ENCODE measurements at regions of chr19 and their contacts with region 1.

Region 1: DNA sequence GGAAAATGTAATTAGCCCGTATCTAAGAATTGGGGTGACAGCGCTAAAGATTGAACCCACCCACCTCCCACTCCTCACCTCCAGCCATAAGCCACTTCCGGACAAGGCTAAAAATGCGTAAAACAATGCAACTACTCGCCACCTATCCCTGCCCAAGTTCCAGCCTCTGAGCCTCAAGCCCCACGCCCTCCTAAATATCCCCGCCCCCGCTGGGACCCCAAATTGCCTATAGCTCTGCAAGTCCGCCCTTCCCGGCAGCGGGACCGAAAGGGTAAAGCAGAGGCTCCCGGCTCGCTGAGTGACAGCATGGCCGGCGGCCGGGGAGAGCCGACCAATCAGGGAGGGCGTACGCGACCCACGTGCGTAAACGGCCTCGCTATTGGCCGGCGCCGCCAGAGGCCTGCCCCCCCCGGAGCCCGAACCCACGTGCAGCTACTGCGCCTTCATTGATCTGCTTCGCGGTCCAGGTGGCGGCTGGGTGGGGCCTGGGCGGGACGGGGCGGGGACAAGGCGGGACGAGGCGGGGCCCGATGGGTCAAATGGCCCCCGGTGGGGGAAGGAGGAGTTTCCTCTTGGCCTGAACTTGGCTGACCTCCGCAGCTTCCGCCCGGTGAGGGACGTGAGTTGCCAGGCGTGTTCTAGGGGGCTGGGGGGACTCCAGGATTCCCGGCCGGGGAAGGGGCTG is at the start of gene TLE6:
- DNase-seq: peak; percentile 95
- ATAC-seq: peak; percentile 98 to 99
- H3K4me3 ChIP-seq: peak within 1 kb of the TSS; percentile 53
- H3K27ac ChIP-seq: peak within 1 kb of the TSS; percentile 76 to 88
- H3K4me1 ChIP-seq: peaks cover 8% of the 10 kb centered on the region; the same call in 2 of the 3 replicates
- CTCF ChIP-seq: no peak
- EP300 ChIP-seq: no peak
- POLR2A ChIP-seq: no peak
- RAD21 ChIP-seq: no peak
- polyA plus RNA-seq, gene TLE6: 3.1 and 6.1 TPM in 2 replicates

Region 2: GRCh38 chr19:2933490-2933910 is 43.6 kb before region 1 on chr19:
- CTCF ChIA-PET with region 1: no interaction called
- POLR2A ChIA-PET with region 1: no interaction called
- DNase-seq: peak in 1 of 2 experiments; percentile 26
- ATAC-seq: no peak
- H3K4me3 ChIP-seq: no peak overlapping the region
- H3K27ac ChIP-seq: no peak overlapping the region
- H3K4me1 ChIP-seq: no peaks in the 10 kb centered on the region
- CTCF ChIP-seq: no peak
- EP300 ChIP-seq: no peak
- POLR2A ChIP-seq: no peak
- RAD21 ChIP-seq: no peak

Region 3: DNA sequence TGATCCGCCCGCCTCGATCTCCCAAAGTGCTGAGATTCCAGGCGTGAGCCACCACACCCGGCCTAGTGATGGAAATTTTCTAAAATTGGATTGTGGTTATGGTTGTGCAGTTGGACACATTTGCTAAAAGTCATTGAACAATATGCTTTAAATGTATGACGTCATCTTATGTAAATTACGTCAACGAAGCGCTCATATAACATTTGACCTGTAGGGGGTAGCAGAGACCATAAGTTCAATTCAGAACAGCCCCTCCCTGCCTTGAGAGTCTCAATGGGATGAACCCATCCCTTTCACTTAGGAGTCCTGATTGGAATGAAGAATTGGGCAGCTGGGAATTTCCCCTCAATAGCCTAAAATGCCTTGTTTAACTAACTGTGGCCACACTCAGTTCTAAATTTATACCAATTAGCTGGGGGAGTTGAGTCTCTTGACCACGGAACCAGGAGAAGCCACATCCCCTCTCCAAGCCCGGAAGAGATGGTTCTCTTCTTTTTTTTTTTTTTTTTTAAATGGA is 15.0 kb before region 1 on chr19:
- CTCF ChIA-PET with region 1: interaction called, 11 read pairs
- POLR2A ChIA-PET with region 1: no interaction called
- DNase-seq: peak; percentile 24 to 66
- ATAC-seq: peak in 1 of 2 experiments; percentile 51; a peak in 4 of 6 replicates
- H3K4me3 ChIP-seq: no peak overlapping the region
- H3K27ac ChIP-seq: no peak overlapping the region
- H3K4me1 ChIP-seq: no peaks in the 10 kb centered on the region
- CTCF ChIP-seq: peak; percentile 72
- EP300 ChIP-seq: no peak
- POLR2A ChIP-seq: no peak
- RAD21 ChIP-seq: peak; percentile 77

Region 4: DNA sequence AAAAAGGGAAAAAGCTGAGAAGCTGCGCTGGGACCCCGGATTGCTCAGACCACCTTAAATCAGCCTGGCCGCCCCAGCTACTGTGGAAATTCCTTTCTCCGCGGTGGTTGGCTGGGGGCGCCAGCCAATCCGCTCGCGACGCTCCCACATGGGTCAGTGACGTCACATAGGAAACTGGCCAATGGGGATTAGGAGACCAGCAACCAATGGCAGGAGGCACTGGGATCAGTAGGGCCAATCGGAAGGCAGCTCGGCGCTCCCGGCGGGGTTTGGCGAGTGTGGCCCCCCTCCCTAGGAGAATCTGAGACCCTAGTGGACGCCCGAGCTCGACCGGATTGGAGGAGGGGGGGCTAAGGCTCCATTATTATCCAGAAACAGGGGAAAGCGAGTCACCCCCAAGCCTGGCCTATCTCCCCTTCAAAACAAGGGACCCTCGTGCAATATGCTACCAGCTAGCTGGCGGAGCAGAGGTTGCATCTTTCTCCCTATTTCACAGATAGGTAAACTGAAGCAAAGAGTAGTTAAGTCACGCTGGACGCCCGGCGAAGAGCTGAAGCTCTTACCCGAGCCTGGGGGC is 58.5 kb after region 1 on chr19:
- CTCF ChIA-PET with region 1: interaction called, 7 read pairs
- POLR2A ChIA-PET with region 1: interaction called, 15 read pairs
- DNase-seq: peak; percentile 98 to 99
- ATAC-seq: peak; percentile 90 to 94
- H3K4me3 ChIP-seq: peak overlapping the region; percentile 65
- H3K27ac ChIP-seq: peak overlapping the region; percentile 90 to 94
- H3K4me1 ChIP-seq: peaks cover 12% of the 10 kb centered on the region
- CTCF ChIP-seq: no peak
- EP300 ChIP-seq: no peak
- POLR2A ChIP-seq: peak; percentile 3; the same call in 1 of the 2 replicates
- RAD21 ChIP-seq: no peak

Measured in A549 (cell line).